CD8-positive, alpha-beta memory T cell (primary cell): ENCODE measurements at regions of chr9 and their contacts with region 1.

Region 1: GRCh38 chr9:93028448-93029006 is 30.0 kb upstream of the SUSD3 start:
- DNase-seq: peak; percentile 51 to 89 (median 83)
- H3K4me3 ChIP-seq: peak overlapping the region; percentile 60
- H3K4me3 Mint-ChIP-seq: peak overlapping the region; percentile 52 to 90 (median 80)
- H3K27ac ChIP-seq: peak overlapping the region; percentile 60
- H3K27ac Mint-ChIP-seq: peak overlapping the region; percentile 92 to 98 (median 95)
- H3K4me1 ChIP-seq: peaks cover 91% of the 10 kb centered on the region
- H3K4me1 Mint-ChIP-seq: peaks cover 64 to 87% (median 80%) of the 10 kb centered on the region in 3 donors
- H3K27me3 ChIP-seq: no peaks in the 10 kb centered on the region
- H3K27me3 Mint-ChIP-seq: no peaks in the 10 kb centered on the region

Region 2: GRCh38 chr9:93013856-93014582 is 14.5 kb before region 1 on chr9:
- CTCF ChIA-PET with region 1: interaction called, 20 read pairs
- POLR2A ChIA-PET with region 1: interaction called, 9 read pairs
- DNase-seq: no peak
- H3K4me3 ChIP-seq: no peak overlapping the region
- H3K4me3 Mint-ChIP-seq: no peak overlapping the region
- H3K27ac ChIP-seq: no peak overlapping the region
- H3K27ac Mint-ChIP-seq: peak overlapping the region in 6 of 8 donors; percentile 32 to 87 (median 58)
- H3K4me1 ChIP-seq: no peaks in the 10 kb centered on the region
- H3K4me1 Mint-ChIP-seq: peaks cover 2 to 13% (median 6%) of the 10 kb centered on the region in 3 donors
- H3K27me3 ChIP-seq: no peaks in the 10 kb centered on the region
- H3K27me3 Mint-ChIP-seq: peaks cover 0 to 1% of the 10 kb centered on the region in 2 donors

Region 3: DNA sequence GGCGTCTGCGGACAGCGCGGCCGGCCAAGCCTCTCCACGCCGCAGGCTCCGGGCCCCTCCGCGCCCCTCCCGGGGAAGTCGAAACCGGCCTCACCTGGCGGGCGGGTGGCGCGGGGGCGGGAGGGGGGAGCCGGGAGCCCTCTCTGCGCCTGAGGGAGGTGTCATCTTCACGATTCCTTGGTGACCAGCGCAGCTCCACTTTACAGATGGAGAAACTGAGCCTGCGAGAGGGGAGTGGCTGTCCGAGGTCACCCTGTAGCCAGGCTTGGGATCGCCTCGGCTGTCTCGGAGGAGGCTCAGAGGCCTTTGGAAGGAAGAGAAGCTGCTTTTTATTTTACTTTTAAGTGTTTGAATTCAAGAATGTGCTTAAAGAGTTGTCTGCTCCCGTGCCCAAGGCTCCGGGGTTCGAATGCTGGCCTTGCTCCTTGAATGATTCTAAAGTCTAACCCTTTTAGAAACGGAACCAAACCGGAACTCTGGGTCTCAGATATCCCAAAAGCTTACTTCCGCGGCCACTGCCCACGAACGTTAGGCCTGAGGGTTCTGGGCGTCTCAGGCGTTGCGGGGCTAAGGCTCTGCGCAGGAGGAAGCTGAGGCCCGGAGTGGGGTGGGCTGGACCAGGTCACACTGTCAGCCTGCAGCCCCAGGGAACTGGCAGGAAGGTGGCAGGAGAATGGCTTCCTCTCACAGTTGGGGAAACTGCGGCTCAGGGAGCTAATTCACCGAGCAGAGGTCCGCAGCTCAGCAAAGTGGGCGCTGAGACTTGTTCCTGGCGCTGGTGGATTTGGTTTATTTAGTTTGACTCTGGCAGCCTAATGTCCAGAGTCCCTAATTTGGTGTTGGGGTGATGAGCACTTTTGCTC is 30.8 kb after region 1 on chr9:
- CTCF ChIA-PET with region 1: interaction called, 10 read pairs
- POLR2A ChIA-PET with region 1: interaction called, 32 read pairs
- DNase-seq: peak in 2 of 5 donors; percentile 18 to 43
- H3K4me3 ChIP-seq: peak overlapping the region; percentile 72
- H3K4me3 Mint-ChIP-seq: peak overlapping the region; percentile 90 to 98 (median 92)
- H3K27ac ChIP-seq: peak overlapping the region; percentile 71
- H3K27ac Mint-ChIP-seq: peak overlapping the region; percentile 93 to 99 (median 95)
- H3K4me1 ChIP-seq: peaks cover 58% of the 10 kb centered on the region
- H3K4me1 Mint-ChIP-seq: peaks cover 64 to 88% (median 68%) of the 10 kb centered on the region in 3 donors
- H3K27me3 ChIP-seq: no peaks in the 10 kb centered on the region
- H3K27me3 Mint-ChIP-seq: peaks cover 0 to under 1% of the 10 kb centered on the region in 2 donors

Region 4: DNA sequence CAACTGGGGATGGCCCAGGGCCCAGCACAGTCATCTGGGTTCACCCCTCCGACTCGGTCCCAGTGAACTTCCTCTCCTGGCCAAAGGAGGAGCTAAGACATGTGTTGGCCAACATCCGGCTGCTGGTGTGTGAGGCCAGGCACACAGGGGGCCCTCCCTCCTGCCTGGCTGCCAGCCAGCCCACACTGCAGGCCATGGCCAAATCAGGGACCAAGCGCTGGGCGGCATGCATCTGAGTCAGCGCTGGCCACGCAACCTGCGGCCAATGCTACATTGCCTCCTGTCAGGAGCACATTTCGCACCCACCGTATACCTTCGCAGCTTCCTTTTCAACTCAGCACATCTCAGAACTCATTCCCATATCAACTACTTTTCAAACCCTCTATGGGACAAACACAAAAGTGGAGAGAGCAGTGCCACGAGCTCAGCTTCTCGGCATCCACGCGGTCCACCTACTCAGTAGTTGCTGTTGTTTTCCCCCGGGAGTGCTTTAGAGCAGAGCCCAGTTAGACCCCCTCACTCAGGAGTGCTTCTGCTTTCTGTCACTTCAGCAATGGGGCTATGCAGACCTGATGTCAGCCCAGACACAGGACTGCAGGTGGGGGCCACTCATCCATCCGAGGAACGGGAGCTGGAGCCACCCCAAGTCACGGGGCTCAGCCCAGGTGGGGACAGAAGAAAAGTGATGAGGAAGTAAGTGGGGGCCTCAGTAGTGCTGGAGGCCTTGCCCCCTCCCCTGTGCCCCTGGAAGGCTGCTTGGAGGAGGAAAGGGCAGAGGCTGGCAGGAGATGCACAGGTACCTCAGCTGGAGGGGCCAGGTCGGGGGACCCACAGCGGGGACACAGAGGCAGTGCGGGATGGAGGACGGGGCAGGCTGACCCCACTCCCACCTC is 91.7 kb after region 1 on chr9:
- CTCF ChIA-PET with region 1: no interaction called
- POLR2A ChIA-PET with region 1: no interaction called
- DNase-seq: peak in 4 of 5 donors; percentile 30 to 59 (median 34)
- H3K4me3 ChIP-seq: no peak overlapping the region
- H3K4me3 Mint-ChIP-seq: peak overlapping the region in 5 of 7 donors; percentile 14 to 75 (median 53)
- H3K27ac ChIP-seq: peak overlapping the region; percentile 24
- H3K27ac Mint-ChIP-seq: peak overlapping the region; percentile 75 to 97 (median 86)
- H3K4me1 ChIP-seq: peaks cover 20% of the 10 kb centered on the region
- H3K4me1 Mint-ChIP-seq: peaks cover 21 to 46% (median 26%) of the 10 kb centered on the region in 3 donors
- H3K27me3 ChIP-seq: no peaks in the 10 kb centered on the region
- H3K27me3 Mint-ChIP-seq: no peaks in the 10 kb centered on the region